ENCODE measurements at regions of chr1 and their contacts with region 1.

Region 1: GRCh38 chr1:205977402-205978014 is 25.7 kb downstream of the RAB7B start:
- DNase-seq: peak; percentile 68
- H3K4me3 ChIP-seq: no peak overlapping the region
- H3K27ac ChIP-seq: no peak overlapping the region
- H3K4me1 ChIP-seq: no peaks in the 10 kb centered on the region
- H3K27me3 ChIP-seq: no peaks in the 10 kb centered on the region
- CTCF ChIP-seq: peak; percentile 91 to 96 (median 93)
- EP300 ChIP-seq: no peak
- POLR2A ChIP-seq: no peak

Region 2: DNA sequence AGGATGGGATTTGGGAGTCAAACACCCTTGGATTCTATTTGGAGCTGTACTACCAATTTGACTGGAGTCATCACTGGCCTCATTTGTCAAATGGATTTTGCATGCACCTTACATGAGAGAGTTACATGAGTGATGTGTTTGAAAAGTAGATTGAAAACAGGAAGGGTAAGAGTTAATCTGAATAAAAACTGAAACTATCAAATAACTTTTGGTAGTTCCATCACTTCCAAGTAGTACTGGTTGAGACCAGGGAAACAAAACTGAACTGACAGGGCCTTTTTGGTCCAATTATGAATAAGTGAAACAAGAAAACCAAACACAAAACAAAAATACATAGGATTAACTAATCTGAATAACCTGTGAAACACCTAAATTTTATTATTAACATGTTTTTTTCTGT is 257.7 kb before region 1 on chr1:
- in situ Hi-C with region 1: no loop called
- intact Hi-C with region 1: no loop called
- DNase-seq: no peak
- H3K4me3 ChIP-seq: no peak overlapping the region
- H3K27ac ChIP-seq: no peak overlapping the region
- H3K4me1 ChIP-seq: peaks cover 0 to 23% (median 14%) of the 10 kb centered on the region in 4 donors
- H3K27me3 ChIP-seq: no peaks in the 10 kb centered on the region
- CTCF ChIP-seq: no peak
- EP300 ChIP-seq: no peak
- POLR2A ChIP-seq: no peak

Region 3: DNA sequence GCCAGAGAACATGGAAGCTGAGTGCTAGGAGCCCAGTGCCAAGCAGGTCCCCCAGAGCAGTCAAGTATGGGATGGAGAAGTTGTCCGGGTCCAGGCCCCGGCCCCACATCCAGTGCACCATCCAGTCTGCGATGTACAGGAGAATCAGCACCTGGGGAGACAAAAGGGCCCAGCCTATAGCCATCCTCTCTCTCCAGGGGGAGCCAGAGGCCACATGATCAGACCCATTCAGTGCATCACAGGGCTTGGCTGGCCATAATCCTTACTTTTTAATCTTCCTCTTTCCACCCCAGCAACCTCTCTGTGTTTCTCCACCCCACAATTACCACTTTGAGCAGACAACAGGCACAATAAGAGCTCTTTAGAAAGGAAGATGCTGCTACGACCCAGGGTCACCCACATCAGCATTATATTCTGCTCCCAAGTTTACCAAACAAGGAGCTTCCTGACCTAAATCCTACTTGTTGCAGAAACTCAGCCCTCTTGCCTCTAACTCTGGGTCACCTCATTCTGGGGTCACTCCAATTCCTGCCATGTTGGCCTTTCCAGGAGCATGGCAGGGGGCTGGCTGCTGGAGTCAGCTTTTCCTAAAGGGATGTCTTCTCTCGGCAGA is 185.8 kb before region 1 on chr1:
- in situ Hi-C with region 1: loop called (anchors 10 to 25 kb)
- intact Hi-C with region 1: loop called (anchors 2 kb)
- DNase-seq: peak; percentile 63
- H3K4me3 ChIP-seq: no peak overlapping the region
- H3K27ac ChIP-seq: no peak overlapping the region
- H3K4me1 ChIP-seq: no peaks in the 10 kb centered on the region
- H3K27me3 ChIP-seq: no peaks in the 10 kb centered on the region
- CTCF ChIP-seq: peak; percentile 65 to 78 (median 70)
- EP300 ChIP-seq: no peak
- POLR2A ChIP-seq: no peak

Region 4: DNA sequence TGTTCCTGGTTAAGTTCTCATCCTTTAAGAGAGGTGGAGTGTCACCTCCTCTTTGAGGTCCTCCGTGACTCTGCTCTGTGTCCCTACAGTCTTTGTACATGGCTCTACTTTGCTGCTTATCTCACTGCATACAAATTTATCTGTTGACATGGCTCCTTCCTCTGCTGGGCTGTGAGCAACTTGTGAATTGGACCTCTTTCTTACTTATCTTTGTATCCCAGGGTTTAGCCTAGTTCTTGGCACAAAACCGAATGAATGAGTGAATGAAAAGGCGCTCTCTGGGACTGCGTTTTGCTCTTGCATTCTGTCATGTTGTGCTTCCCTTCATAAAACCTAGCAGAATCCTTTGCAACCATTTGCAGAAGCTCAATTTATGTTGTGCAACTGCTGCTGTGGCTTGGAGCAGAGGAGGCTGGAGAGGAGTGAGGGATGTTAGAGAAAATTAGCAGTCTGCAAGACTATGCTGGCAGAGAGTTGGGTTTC is 46.7 kb before region 1 on chr1:
- in situ Hi-C with region 1: no loop called
- intact Hi-C with region 1: loop called (anchors 1 kb)
- DNase-seq: no peak
- H3K4me3 ChIP-seq: no peak overlapping the region
- H3K27ac ChIP-seq: no peak overlapping the region
- H3K4me1 ChIP-seq: no peaks in the 10 kb centered on the region
- H3K27me3 ChIP-seq: peaks cover 10% of the 10 kb centered on the region
- CTCF ChIP-seq: no peak
- EP300 ChIP-seq: no peak
- POLR2A ChIP-seq: no peak

Region 5: GRCh38 chr1:206075786-206076755 is 98.6 kb after region 1 on chr1:
- in situ Hi-C with region 1: no loop called
- intact Hi-C with region 1: no loop called
- DNase-seq: no peak
- H3K4me3 ChIP-seq: no peak overlapping the region
- H3K27ac ChIP-seq: no peak overlapping the region
- H3K4me1 ChIP-seq: no peaks in the 10 kb centered on the region
- H3K27me3 ChIP-seq: no peaks in the 10 kb centered on the region
- CTCF ChIP-seq: no peak
- EP300 ChIP-seq: no peak
- POLR2A ChIP-seq: no peak

Region 6: DNA sequence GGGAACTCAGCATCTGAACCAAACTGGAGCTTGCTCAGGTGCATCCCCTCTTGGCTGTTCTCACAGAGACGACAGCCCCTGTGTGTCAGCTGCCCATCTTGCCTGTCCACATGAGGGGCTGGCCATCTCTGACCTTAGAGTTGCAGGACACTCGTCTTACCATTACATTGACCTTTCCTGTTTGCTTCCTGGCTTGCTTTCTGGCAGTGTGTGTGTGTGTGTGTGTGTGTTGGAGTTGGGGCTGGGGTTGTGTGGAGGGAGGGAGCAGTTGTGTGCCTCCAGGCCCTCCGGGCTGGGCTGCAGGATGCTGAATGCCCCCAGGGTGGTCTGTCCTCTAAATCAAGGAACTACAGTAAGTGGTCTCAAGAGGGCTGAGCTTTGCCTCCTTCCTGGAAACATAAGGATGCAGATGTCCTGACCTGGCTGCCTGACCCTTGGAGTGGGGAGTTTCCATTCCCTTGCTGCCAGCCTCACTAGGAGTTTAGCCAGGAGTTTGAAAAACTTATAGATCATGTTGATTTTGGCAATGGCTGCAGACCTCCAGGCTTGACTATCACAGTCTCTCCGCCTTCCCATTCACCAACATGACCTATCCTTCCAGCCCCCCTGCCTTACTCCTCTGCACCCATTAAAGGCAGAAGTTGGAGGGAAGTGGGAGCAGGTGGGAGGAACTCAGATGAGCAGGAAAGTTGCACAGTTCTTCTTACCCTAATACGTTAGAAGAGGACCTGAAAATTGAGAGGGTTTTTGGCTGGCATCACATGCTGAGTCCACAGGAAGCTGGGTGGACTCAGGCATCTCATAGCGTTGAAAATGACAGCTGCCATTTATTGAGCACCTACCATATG is 548.8 kb after region 1 on chr1:
- in situ Hi-C with region 1: no loop called
- intact Hi-C with region 1: no loop called
- DNase-seq: no peak
- H3K4me3 ChIP-seq: no peak overlapping the region
- H3K27ac ChIP-seq: no peak overlapping the region
- H3K4me1 ChIP-seq: no peaks in the 10 kb centered on the region
- H3K27me3 ChIP-seq: no peaks in the 10 kb centered on the region
- CTCF ChIP-seq: no peak
- EP300 ChIP-seq: no peak
- POLR2A ChIP-seq: no peak

Measured in transverse colon (tissue), 4 donors.